ENCODE measurements at regions of chr19 and their contacts with region 1.

Region 1: GRCh38 chr19:14048443-14049153 is 13.3 kb downstream of the PALM3 start:
- DNase-seq: peak; percentile 83
- H3K4me3 Mint-ChIP-seq: no peak overlapping the region
- H3K27ac Mint-ChIP-seq: peak overlapping the region; percentile 51
- H3K4me1 Mint-ChIP-seq: peaks cover 4% of the 10 kb centered on the region
- H3K27me3 Mint-ChIP-seq: no peaks in the 10 kb centered on the region

Region 2: DNA sequence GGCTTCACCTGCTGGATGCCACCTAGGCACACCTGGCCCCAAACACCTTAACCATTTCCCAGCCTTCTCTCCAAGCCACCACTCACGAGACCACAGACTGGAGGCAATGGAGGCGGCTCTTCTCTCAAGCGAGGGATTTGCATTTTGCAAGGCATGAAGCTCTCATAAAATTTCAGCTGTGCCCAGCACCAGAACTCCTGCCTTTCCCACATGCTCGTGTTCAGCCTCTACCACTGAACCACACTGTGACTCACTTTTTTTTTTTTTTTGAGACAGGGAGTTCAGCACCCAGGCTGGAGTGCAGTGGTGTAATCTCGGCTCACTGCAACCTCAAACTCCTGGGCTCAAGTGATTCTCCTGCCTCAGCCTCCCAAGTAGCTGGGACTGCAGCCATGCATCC is 161.1 kb before region 1 on chr19:
- CTCF ChIA-PET with region 1: interaction called, 31 read pairs
- POLR2A ChIA-PET with region 1: no interaction called
- intact Hi-C with region 1: loop called (anchors 5 kb)
- DNase-seq: no peak
- H3K4me3 Mint-ChIP-seq: no peak overlapping the region
- H3K27ac Mint-ChIP-seq: no peak overlapping the region
- H3K4me1 Mint-ChIP-seq: peaks cover 4% of the 10 kb centered on the region
- H3K27me3 Mint-ChIP-seq: no peaks in the 10 kb centered on the region

Region 3: DNA sequence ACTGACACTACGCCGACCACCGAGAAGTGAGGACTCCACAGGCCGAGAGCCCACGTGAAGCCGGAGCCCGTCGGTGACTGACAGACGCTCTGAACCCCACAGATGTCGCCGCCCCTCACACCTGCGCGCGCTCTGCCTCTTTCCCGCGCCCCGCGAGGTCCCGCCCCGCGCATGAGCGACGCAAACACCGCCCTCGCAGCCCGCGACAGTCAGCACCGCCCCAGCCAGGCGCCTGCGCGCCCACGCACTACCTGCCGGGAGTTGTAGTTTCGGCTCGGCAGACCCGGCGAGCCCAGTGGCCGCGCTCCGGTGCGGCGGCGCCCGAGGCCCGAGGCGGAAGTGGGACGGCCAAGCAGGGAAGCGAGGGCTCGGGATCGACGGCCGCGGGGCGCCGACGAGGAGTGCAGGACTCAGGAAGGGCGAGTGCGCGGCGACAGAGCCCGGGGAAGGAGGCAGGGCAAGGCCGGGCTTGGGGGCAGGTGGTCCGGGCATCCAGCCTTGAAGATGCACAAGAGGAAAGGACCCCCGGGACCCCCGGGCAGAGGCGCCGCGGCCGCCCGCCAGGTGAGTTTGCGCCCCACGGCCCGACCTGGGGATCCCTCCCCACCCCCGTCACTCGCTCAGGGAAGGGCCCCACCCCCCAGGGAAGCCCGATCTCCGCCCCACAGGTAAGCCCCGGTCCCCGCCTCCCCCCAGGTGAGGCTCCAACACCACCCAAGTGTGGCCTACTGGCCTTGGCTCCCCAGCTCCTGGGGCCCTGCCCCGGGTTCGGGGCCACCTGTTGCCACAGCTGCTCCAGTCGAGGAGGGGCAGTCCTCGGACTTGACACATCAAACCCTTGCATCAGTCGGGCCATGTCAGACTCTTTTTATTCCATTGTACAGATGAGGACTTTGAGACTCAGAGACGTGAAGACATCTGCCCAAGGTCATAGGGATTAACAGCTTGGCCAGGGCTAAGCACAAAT is 142.4 kb before region 1 on chr19 and contains the starts of genes BRME1 and CC2D1A:
- CTCF ChIA-PET with region 1: interaction called, 15 read pairs
- POLR2A ChIA-PET with region 1: no interaction called
- intact Hi-C with region 1: no loop called
- DNase-seq: peak; percentile 97
- H3K4me3 Mint-ChIP-seq: peak within 1 kb of the TSS; percentile 83
- H3K27ac Mint-ChIP-seq: peak within 1 kb of the TSS; percentile 86
- H3K4me1 Mint-ChIP-seq: peaks cover 23% of the 10 kb centered on the region
- H3K27me3 Mint-ChIP-seq: no peaks in the 10 kb centered on the region
- total RNA-seq, gene BRME1: 7.7 to 9.0 TPM
- total RNA-seq, gene CC2D1A: 25.8 to 31.0 TPM

Region 4: GRCh38 chr19:13995017-13995728 is 53.4 kb before region 1 on chr19:
- CTCF ChIA-PET with region 1: no interaction called
- POLR2A ChIA-PET with region 1: no interaction called
- intact Hi-C with region 1: no loop called
- DNase-seq: no peak
- H3K4me3 Mint-ChIP-seq: no peak overlapping the region
- H3K27ac Mint-ChIP-seq: peak overlapping the region; percentile 10
- H3K4me1 Mint-ChIP-seq: peaks cover 3% of the 10 kb centered on the region
- H3K27me3 Mint-ChIP-seq: no peaks in the 10 kb centered on the region

Region 5: GRCh38 chr19:14073261-14073924 is 24.8 kb after region 1 on chr19:
- CTCF ChIA-PET with region 1: interaction called, 34 read pairs
- POLR2A ChIA-PET with region 1: no interaction called
- intact Hi-C with region 1: no loop called
- DNase-seq: peak; percentile 80
- H3K4me3 Mint-ChIP-seq: peak overlapping the region; percentile 95
- H3K27ac Mint-ChIP-seq: peak overlapping the region; percentile 84
- H3K4me1 Mint-ChIP-seq: peaks cover 13% of the 10 kb centered on the region
- H3K27me3 Mint-ChIP-seq: no peaks in the 10 kb centered on the region